A549 (cell line): ENCODE measurements at regions of chr7 and their contacts with region 1.

Region 1: GRCh38 chr7:148940702-148941597 is 56.9 kb upstream of the EZH2 start:
- DNase-seq: peak; percentile 88 to 89
- ATAC-seq: peak; percentile 85 to 86
- H3K4me3 ChIP-seq: peak overlapping the region; percentile 56
- H3K27ac ChIP-seq: peak overlapping the region; percentile 84 to 98
- H3K4me1 ChIP-seq: no peaks in the 10 kb centered on the region
- CTCF ChIP-seq: no peak; the same call in 2 of the 3 replicates
- EP300 ChIP-seq: no peak
- POLR2A ChIP-seq: peak; percentile 47
- RAD21 ChIP-seq: no peak

Region 2: DNA sequence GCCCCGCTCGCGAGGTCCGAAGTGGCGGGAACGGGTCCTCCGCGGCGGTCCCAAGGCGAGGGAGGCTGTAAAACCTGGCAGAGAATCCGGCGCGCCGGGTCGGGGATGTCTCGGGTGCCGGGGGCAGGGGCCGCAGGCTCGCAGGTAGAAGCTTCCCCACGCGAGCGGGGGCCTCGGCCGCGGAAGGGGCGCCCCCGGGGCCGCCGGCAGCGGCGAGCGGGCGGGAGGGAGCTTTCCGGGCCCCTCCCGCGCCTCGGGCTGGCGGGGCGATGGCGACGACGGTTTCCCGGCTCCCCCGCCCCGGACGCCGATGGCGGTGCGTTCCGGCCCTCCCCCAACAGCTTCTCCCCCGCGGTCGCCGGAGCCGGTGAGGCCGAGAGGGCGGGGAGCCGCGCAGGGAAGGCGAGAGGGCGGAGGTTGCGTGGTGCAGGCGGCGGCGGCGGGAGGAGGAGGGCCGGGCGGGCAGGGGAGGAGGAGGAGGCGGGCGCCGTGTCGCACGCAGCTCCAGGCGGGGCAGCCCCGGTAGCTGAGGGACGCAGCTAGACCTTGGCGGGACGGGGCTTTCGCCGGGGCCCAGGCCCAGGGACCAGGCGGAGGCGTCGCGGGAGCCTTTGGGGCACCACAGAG is 242.4 kb before region 1 on chr7 and contains the start of gene CUL1:
- CTCF ChIA-PET with region 1: no interaction called
- POLR2A ChIA-PET with region 1: interaction called, 10 read pairs
- DNase-seq: peak; percentile 39 to 80
- ATAC-seq: peak; percentile 87
- H3K4me3 ChIP-seq: peak within 1 kb of the TSS; percentile 78
- H3K27ac ChIP-seq: peak within 1 kb of the TSS; percentile 98 to 99
- H3K4me1 ChIP-seq: peaks cover 38% of the 10 kb centered on the region
- CTCF ChIP-seq: no peak
- EP300 ChIP-seq: no peak
- POLR2A ChIP-seq: peak; percentile 83
- RAD21 ChIP-seq: 0 out of 5 replicates have a peak, but pooled peaks of 1 of the 2 experiments have one; percentile 15
- polyA plus RNA-seq, gene CUL1: 59.3 and 70.6 TPM in 2 replicates

Region 3: GRCh38 chr7:148773334-148773733 is 167.6 kb before region 1 on chr7:
- CTCF ChIA-PET with region 1: no interaction called
- POLR2A ChIA-PET with region 1: interaction called, 10 read pairs
- DNase-seq: no peak
- ATAC-seq: no peak
- H3K4me3 ChIP-seq: no peak overlapping the region
- H3K27ac ChIP-seq: peak overlapping the region in 1 of 2 experiments; percentile 47; a peak in 2 of 6 replicates
- H3K4me1 ChIP-seq: peaks cover 23% of the 10 kb centered on the region
- CTCF ChIP-seq: no peak
- EP300 ChIP-seq: no peak
- POLR2A ChIP-seq: no peak
- RAD21 ChIP-seq: no peak

Region 4: DNA sequence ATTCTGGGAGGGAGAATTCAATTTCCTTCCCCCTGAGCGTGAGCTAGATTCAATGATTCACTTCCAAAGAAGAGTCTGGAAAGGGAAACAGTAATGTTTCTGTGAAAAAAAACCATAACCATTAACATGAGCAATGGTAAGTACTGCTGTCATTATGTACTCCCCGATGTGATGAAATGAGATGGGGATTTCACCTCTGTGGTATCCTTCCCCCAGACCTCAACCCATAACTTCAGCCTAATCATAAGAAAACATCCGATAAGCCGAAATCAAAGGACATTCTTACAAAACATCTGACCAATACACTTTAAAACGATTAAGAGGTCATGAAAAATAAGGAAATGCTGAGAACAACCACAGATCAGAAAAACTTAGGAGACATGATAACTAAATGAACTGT is 84.1 kb before region 1 on chr7:
- CTCF ChIA-PET with region 1: interaction called, 17 read pairs
- POLR2A ChIA-PET with region 1: no interaction called
- DNase-seq: no peak
- ATAC-seq: peak in 1 of 2 experiments; percentile 24; a peak in 2 of 6 replicates
- H3K4me3 ChIP-seq: no peak overlapping the region
- H3K27ac ChIP-seq: no peak overlapping the region
- H3K4me1 ChIP-seq: 0 out of 3 replicates have a peak, but pooled peaks cover 4% of the 10 kb centered on the region
- CTCF ChIP-seq: no peak
- EP300 ChIP-seq: no peak
- POLR2A ChIP-seq: no peak
- RAD21 ChIP-seq: no peak

Region 5: DNA sequence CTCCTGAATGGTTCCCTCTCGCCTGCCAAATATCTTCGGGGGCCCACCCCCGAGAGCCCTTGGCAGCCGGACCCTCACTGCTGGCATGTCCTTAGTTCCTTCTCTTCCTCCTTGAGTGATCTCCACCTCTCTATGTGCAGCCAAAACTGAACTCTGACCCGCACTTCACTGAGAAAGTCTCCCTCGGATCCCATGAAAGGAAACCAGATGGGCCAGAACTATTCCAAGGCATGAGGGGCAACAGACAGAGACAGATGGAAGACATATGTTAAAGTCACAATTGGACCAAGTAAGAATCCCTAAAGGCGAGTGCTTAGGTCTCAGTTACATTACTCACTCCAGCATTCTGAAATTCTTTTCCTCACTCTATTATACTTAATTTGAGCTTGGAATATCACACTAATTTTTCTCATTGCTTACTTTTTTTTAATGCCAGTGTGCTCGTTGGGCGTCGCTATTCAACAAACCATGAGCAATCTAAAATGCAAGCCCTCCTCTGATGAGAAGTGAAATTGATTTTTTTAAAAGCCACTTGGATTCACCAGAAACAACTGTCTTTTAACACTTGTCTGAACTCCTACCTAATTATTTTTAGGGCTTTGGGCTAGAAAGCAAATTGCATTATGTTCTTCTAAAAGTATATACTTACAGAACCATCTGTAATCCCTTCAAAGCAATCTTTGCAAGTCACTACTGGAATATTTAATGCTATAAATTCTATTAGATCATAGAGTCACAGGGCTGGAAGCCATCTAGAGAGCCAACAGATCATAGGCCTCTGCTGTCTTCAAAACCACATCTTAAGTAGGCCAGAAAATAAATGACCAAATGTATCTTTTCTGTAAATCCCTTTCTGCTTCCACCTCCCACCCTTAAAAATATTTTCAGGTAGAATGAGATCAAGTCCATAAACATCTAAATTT is 13.6 kb before region 1 on chr7:
- CTCF ChIA-PET with region 1: interaction called, 5 read pairs
- POLR2A ChIA-PET with region 1: interaction called, 11 read pairs
- DNase-seq: no peak
- ATAC-seq: no peak
- H3K4me3 ChIP-seq: no peak overlapping the region
- H3K27ac ChIP-seq: no peak overlapping the region
- H3K4me1 ChIP-seq: no peaks in the 10 kb centered on the region
- CTCF ChIP-seq: no peak
- EP300 ChIP-seq: no peak
- POLR2A ChIP-seq: no peak
- RAD21 ChIP-seq: no peak